CD8-positive, alpha-beta T cell (primary cell): ENCODE measurements at regions of chr11 and their contacts with region 1.

Region 1: GRCh38 chr11:2885676-2886081 is at the start of gene CDKN1C:
- DNase-seq: peak; percentile 65 to 91 (median 84)
- ATAC-seq: peak; percentile 91
- H3K4me3 ChIP-seq: peak within 1 kb of the TSS; percentile 74 to 89
- H3K4me3 Mint-ChIP-seq: peak within 1 kb of the TSS; percentile 93
- H3K27ac ChIP-seq: peak within 1 kb of the TSS in 1 of 2 experiments; percentile 31
- H3K27ac Mint-ChIP-seq: peak within 1 kb of the TSS; percentile 60
- H3K4me1 ChIP-seq: peaks cover 16% of the 10 kb centered on the region
- H3K4me1 Mint-ChIP-seq: peaks cover 19% of the 10 kb centered on the region
- H3K27me3 ChIP-seq: no peaks in the 10 kb centered on the region
- H3K27me3 Mint-ChIP-seq: no peaks in the 10 kb centered on the region
- CTCF ChIP-seq: no peak
- total RNA-seq, gene CDKN1C: 2.5 to 3.6 TPM

Region 2: DNA sequence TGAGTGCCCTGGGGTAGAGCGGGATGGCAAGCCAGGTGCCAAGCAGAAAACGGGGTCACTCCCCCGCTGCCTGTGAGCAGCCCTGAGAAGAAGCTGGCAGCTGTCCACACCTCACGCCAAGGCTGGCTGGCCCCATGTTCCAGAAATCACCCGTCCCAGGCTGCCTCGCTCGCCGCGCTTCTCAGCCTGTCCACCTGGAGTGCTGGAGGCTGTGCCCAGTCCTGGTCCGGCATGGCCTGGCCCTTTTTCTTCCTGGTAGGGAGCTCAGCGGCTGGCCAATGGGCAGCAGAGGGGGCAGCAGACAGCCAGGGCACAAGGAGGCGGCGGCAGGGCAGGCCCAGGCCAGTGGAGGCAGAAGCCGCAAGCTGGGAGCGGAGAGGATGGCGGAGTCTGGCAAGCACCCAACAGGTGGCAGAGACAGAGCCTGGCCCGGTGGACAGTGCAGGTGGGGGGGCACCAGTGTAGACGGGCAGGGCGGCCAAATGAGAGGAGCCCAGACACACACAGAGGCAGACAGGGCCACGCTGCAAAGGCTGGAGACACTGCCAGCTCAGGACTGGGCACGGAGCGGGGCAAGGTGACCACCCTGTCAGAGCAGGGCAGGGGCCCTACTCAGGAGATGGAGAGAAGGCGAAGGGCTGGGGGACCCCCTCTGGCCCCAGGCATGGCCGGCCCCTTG is 676.8 kb before region 1 on chr11:
- CTCF ChIA-PET with region 1: no interaction called
- POLR2A ChIA-PET with region 1: no interaction called
- intact Hi-C with region 1: no loop called
- DNase-seq: peak in 2 of 9 experiments; percentile 3 to 5
- ATAC-seq: no peak
- H3K4me3 ChIP-seq: no peak overlapping the region
- H3K4me3 Mint-ChIP-seq: no peak overlapping the region
- H3K27ac ChIP-seq: no peak overlapping the region
- H3K27ac Mint-ChIP-seq: no peak overlapping the region
- H3K4me1 ChIP-seq: peaks cover 12% of the 10 kb centered on the region
- H3K4me1 Mint-ChIP-seq: peaks cover 9% of the 10 kb centered on the region
- H3K27me3 ChIP-seq: no peaks in the 10 kb centered on the region
- H3K27me3 Mint-ChIP-seq: no peaks in the 10 kb centered on the region
- CTCF ChIP-seq: no peak

Region 3: DNA sequence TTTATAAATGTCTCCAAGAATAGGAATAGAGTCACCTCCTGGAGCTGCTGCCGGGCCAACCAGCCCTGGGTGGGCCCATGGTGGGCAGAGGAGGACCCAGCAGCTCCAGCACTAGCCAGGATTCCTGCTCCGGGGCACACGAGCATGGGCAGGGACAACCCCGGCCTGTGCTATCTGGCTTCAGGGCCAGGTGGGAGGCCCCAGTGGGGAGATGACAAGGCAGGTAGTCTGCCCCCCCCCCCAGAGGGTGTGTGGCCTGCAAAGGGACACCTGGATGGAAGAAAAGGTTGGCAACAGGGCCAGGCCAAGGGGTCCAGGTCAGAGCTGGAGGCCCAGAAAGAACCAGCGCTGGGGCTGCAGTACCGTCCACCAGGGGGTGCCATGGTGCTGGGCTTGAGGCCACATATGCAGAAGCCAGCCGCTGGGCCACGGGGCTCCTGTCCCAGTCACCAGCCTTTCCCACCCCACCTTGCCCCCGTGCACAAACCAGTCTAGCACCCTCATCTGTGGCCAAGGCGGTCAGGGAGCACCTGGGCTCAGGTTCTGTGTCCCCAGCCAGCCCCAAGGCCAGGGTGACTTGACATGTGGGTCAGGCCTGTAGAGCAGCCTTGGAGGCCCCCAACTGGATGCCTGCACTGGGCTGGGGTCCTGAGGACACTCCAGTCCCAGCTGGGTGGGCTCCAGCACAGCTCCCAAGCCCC is 580.4 kb before region 1 on chr11:
- CTCF ChIA-PET with region 1: interaction called, 11 read pairs
- POLR2A ChIA-PET with region 1: no interaction called
- intact Hi-C with region 1: loop called (anchors 1 to 2 kb)
- DNase-seq: peak; percentile 67 to 93 (median 86)
- ATAC-seq: peak; percentile 52
- H3K4me3 ChIP-seq: peak overlapping the region; percentile 82 to 83
- H3K4me3 Mint-ChIP-seq: peak overlapping the region; percentile 91
- H3K27ac ChIP-seq: peak overlapping the region; percentile 48 to 61
- H3K27ac Mint-ChIP-seq: peak overlapping the region; percentile 86
- H3K4me1 ChIP-seq: peaks cover 56% of the 10 kb centered on the region
- H3K4me1 Mint-ChIP-seq: peaks cover 51% of the 10 kb centered on the region
- H3K27me3 ChIP-seq: no peaks in the 10 kb centered on the region
- H3K27me3 Mint-ChIP-seq: no peaks in the 10 kb centered on the region
- CTCF ChIP-seq: peak; percentile 78

Region 4: DNA sequence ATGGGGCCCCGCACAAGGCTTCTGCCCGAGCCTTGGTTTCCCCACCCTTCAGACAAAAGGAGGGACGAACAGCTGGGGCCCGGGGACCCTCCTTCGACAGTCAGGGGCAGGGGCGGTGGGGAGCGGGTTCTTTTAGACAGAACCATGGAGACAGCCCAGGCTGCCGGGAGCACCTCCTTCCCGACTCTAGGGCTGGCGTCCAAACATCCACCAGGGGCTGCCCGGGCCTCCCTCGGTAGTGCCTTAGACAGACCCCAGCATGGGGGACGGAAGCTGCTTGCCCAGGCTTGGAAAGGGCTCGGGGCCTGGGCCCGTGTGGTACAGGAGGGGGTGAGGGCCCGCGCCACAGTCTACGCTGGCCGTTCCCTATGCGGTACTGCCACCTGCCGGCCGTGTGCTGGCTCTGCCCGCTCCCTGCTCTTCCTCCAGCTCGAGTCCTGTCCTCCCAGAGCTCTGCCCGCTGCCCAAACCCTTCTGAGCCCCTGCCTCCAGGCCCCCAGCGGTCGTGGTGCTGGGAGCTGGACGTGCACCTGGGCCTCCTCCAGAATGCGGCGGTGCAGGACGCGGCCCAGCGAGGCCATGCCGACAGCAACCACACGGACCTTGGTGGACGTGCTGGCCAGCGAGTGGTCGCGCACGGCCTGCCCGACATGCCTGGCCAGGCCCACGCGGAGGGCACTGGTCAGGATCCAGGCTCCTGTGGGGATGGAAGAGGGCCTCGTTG is 465.0 kb before region 1 on chr11:
- CTCF ChIA-PET with region 1: interaction called, 15 read pairs
- POLR2A ChIA-PET with region 1: no interaction called
- intact Hi-C with region 1: loop called in 1 of 2 experiments (anchors 5 kb)
- DNase-seq: peak; percentile 52 to 86 (median 69)
- ATAC-seq: peak; percentile 94
- H3K4me3 ChIP-seq: no peak overlapping the region
- H3K4me3 Mint-ChIP-seq: no peak overlapping the region
- H3K27ac ChIP-seq: no peak overlapping the region
- H3K27ac Mint-ChIP-seq: no peak overlapping the region
- H3K4me1 ChIP-seq: peaks cover 14% of the 10 kb centered on the region
- H3K4me1 Mint-ChIP-seq: peaks cover 4% of the 10 kb centered on the region
- H3K27me3 ChIP-seq: peaks cover 0 to 3% of the 10 kb centered on the region in 2 experiments
- H3K27me3 Mint-ChIP-seq: no peaks in the 10 kb centered on the region
- CTCF ChIP-seq: peak; percentile 83

Region 5: DNA sequence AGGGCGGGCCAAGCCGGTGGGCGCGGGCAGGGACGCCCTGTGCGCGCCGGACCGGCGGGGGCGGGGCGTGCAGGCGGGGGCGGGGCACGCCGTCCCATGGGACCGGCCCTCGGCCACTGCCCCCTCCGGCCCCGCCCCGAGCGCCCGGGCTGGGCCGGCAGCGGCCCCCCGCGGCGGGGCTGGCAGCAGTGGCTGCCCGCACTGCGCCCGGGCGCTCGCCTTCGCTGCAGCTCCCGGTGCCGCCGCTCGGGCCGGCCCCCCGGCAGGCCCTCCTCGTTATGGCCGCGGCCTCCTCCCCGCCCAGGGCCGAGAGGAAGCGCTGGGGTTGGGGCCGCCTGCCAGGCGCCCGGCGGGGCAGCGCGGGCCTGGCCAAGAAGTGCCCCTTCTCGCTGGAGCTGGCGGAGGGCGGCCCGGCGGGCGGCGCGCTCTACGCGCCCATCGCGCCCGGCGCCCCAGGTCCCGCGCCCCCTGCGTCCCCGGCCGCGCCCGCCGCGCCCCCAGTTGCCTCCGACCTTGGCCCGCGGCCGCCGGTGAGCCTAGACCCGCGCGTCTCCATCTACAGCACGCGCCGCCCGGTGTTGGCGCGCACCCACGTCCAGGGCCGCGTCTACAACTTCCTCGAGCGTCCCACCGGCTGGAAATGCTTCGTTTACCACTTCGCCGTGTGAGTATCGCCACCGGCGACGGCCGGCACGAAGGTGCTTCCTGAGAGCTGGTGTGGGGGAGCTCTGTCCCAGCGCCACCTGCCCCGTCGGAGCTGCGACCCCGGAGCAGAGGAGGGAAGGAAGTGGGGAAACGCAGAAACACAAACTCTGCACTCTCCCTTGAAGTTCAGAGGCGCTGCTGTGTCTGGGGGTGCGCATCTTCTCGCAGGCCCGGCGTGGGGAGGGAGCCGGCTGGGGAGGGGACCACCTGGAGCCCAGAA is 440.6 kb before region 1 on chr11 and contains the start of gene KCNQ1:
- CTCF ChIA-PET with region 1: interaction called, 4 read pairs
- POLR2A ChIA-PET with region 1: no interaction called
- intact Hi-C with region 1: loop called (anchors 2 to 5 kb)
- DNase-seq: peak in 4 of 9 experiments; percentile 29 to 68 (median 65)
- ATAC-seq: peak; percentile 41
- H3K4me3 ChIP-seq: peak within 1 kb of the TSS; percentile 53 to 56
- H3K4me3 Mint-ChIP-seq: peak within 1 kb of the TSS; percentile 91
- H3K27ac ChIP-seq: peak within 1 kb of the TSS in 1 of 2 experiments; percentile 35
- H3K27ac Mint-ChIP-seq: peak within 1 kb of the TSS; percentile 88
- H3K4me1 ChIP-seq: peaks cover 51% of the 10 kb centered on the region
- H3K4me1 Mint-ChIP-seq: peaks cover 41% of the 10 kb centered on the region
- H3K27me3 ChIP-seq: peaks cover 0 to 25% of the 10 kb centered on the region in 2 experiments
- H3K27me3 Mint-ChIP-seq: no peaks in the 10 kb centered on the region
- CTCF ChIP-seq: no peak
- total RNA-seq, gene KCNQ1: 24.9 to 25.7 TPM

Region 6: GRCh38 chr11:2862950-2863618 is 22.6 kb before region 1 on chr11:
- CTCF ChIA-PET with region 1: no interaction called
- POLR2A ChIA-PET with region 1: no interaction called
- intact Hi-C with region 1: no loop called
- DNase-seq: no peak
- ATAC-seq: no peak
- H3K4me3 ChIP-seq: no peak overlapping the region
- H3K4me3 Mint-ChIP-seq: no peak overlapping the region
- H3K27ac ChIP-seq: no peak overlapping the region
- H3K27ac Mint-ChIP-seq: no peak overlapping the region
- H3K4me1 ChIP-seq: peaks cover 2% of the 10 kb centered on the region
- H3K4me1 Mint-ChIP-seq: no peaks in the 10 kb centered on the region
- H3K27me3 ChIP-seq: peaks cover under 1 to 8% of the 10 kb centered on the region in 2 experiments
- H3K27me3 Mint-ChIP-seq: peaks cover 31% of the 10 kb centered on the region
- CTCF ChIP-seq: no peak

Region 7: DNA sequence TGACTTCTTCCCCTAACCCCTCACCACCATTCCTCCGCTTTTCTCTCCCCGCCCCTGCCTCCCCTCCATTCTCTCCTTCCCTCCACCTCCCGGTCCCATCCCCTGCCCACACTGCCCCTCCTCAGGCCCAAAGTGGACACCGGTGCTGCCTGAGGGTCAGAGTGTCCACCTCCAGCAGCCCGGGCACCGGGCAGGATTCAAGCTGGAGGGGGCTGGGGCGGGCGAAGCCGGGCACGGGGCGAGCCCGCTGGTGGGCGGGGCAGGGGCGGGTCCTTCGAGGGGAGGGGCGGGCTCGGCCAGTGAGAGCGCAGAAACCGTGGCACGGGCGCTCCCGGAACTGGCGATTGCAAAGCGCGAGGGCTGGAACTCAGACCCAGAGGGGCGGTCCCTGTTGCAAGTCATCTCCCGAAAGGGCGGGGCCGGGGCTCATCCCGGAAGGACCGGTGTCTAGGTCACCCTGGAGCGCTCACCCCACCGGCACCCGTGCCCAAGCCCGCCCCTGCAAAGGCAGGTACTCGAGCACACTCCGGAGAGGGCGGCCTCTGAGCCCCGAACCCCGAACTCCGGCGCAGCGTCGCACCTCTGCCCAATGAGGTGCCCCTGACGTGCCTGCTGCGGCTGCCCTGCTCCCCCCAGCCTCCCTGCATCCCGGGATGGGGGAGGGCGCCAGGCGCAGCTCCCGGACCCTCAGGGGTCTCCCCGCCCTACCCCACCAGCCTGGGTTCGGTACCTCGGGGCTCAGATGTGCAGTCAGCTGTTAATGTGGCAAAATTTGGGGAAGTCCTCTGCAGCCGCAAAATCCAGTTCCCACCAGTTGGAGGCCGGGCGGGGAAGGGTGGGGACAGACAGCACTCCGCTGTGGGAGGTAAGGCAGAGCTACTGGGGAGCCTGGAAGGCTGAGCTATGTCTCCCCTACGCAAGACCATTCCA is 16.4 kb after region 1 on chr11:
- CTCF ChIA-PET with region 1: interaction called, 17 read pairs
- POLR2A ChIA-PET with region 1: interaction called, 3 read pairs
- intact Hi-C with region 1: loop called in 1 of 2 experiments (anchors 2 kb)
- DNase-seq: peak; percentile 72 to 94 (median 89)
- ATAC-seq: peak; percentile 77
- H3K4me3 ChIP-seq: peak overlapping the region; percentile 70 to 72
- H3K4me3 Mint-ChIP-seq: peak overlapping the region; percentile 78
- H3K27ac ChIP-seq: peak overlapping the region; percentile 40 to 74
- H3K27ac Mint-ChIP-seq: peak overlapping the region; percentile 32
- H3K4me1 ChIP-seq: peaks cover 42% of the 10 kb centered on the region
- H3K4me1 Mint-ChIP-seq: peaks cover 47% of the 10 kb centered on the region
- H3K27me3 ChIP-seq: no peaks in the 10 kb centered on the region
- H3K27me3 Mint-ChIP-seq: no peaks in the 10 kb centered on the region
- CTCF ChIP-seq: no peak

Region 8: DNA sequence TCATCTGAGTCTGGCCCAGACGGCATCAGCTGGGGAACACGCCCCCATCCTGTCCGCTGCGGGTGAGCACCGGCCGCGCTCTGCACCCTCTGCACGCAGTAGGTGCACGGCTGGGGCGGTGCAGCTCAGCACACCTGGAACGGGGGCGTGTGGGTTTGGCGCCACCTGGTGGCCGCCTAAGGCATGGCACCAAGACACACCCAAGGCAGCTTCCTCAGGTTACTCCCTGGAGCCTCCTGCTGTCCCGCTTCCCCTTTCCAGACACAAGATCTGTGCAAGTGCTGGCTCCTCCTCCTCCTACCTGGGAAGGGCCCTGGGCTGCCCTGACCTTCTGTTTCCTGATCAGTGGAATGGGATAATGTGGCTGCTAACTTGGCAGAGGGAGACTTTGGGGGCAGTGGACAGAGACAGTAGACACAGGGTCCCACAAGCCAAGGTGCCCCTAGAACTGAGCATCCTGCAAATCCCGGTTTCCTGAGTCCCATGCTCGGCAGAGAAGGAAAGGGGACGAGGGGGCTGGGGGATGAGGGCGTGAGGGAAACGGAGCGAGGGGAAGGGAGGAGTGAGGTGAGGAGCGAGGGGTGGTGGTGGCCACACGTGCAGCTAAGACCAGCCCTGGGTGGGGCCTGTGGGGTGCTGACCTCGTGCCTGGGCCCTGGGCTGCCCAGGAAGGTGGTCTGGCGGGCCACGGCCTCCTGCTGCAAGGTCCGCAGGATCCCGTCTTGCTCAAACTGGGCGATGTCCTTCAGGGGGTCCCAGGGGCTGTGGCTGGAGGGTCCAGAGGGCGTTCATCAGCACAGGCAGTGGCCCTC is 206.3 kb after region 1 on chr11:
- CTCF ChIA-PET with region 1: interaction called, 17 read pairs
- POLR2A ChIA-PET with region 1: no interaction called
- intact Hi-C with region 1: loop called in 1 of 2 experiments (anchors 5 kb)
- DNase-seq: peak; percentile 50 to 86 (median 67)
- ATAC-seq: peak; percentile 97
- H3K4me3 ChIP-seq: no peak overlapping the region
- H3K4me3 Mint-ChIP-seq: no peak overlapping the region
- H3K27ac ChIP-seq: no peak overlapping the region
- H3K27ac Mint-ChIP-seq: no peak overlapping the region
- H3K4me1 ChIP-seq: no peaks in the 10 kb centered on the region
- H3K4me1 Mint-ChIP-seq: no peaks in the 10 kb centered on the region
- H3K27me3 ChIP-seq: no peaks in the 10 kb centered on the region
- H3K27me3 Mint-ChIP-seq: no peaks in the 10 kb centered on the region
- CTCF ChIP-seq: peak; percentile 90